HepG2 (cell line): ENCODE measurements at regions of chr22 and their contacts with region 1.

Region 1: DNA sequence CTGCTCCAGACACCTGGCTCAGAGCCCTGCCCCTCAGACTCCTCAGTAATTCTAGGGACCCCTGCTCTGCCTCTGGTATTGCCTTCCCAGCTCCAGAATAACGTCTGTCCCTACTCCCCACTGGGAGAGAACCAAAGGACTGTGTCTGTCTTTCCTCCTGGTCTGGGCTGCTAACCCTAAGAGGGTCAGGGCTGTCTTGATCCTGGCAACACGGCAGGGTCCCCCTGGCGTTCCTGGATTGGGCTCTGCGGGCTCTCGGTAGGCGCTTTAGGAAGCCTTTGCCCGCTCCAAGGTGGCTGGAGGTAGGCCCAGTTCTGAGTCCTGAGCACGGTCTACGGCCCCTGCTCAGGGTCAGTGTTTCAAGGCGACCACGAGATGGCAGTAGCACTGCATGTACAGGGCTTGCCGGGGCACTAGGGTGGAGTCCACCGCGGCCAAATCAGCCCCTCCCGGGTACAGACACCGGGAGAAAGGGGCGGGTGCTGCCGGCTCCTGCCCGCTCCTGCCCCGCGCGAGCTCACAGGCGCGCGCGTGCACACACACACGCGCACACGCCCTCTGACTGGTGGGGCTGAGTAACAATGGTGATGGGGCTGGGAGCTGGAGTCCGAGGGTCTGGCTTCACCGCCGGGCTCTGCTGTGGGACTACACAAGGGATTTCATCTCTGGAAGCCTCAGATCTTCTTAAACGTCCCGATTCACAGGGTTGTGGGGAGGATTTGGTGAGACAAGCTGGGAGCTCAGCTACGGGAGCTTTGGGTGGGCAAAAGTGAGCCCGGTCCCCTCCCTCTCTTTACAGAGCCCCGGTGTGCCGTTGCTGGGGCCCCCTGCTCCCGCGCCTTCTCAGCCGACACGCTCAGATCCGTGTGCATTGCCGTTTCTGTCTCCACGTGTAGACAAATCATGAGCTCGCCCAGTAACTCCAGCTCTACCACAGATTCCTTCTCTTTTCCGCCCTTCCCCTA is 30.1 kb upstream of the HMOX1 start:
- DNase-seq: peak; percentile 79
- ATAC-seq: peak; percentile 87
- H3K4me3 ChIP-seq: peak overlapping the region; percentile 56 to 80 (median 57)
- H3K27ac ChIP-seq: peak overlapping the region; percentile 53
- H3K4me1 ChIP-seq: peaks cover 53% of the 10 kb centered on the region
- H3K27me3 ChIP-seq: no peaks in the 10 kb centered on the region; a peak in 1 of 5 replicates
- CTCF ChIP-seq: peak; percentile 99
- EP300 ChIP-seq: no peak
- POLR2A ChIP-seq: peak in 1 of 2 experiments; percentile 50; a peak in 2 of 4 replicates
- RAD21 ChIP-seq: peak; percentile 99

Region 2: DNA sequence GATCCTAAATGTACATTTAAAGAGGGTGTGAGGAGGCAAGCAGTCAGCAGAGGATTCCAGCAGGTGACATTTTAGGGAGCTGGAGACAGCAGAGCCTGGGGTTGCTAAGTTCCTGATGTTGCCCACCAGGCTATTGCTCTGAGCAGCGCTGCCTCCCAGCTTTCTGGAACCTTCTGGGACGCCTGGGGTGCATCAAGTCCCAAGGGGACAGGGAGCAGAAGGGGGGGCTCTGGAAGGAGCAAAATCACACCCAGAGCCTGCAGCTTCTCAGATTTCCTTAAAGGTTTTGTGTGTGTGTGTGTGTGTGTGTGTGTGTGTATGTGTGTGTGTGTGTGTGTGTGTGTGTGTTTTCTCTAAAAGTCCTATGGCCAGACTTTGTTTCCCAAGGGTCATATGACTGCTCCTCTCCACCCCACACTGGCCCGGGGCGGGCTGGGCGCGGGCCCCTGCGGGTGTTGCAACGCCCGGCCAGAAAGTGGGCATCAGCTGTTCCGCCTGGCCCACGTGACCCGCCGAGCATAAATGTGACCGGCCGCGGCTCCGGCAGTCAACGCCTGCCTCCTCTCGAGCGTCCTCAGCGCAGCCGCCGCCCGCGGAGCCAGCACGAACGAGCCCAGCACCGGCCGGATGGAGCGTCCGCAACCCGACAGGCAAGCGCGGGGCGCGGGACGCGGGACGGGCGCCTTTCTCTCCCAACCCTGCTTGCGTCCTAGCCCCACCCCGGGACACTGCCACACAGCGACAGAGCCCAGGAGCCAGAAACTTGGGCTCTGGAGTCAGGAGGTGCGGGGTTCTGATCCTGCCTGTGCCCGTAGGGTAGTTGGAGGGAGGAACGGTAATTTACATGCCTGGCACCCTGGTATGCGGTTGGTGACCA is 30.0 kb after region 1 on chr22 and contains the start of gene HMOX1:
- CTCF ChIA-PET with region 1: interaction called, 5 read pairs
- POLR2A ChIA-PET with region 1: no interaction called
- in situ Hi-C with region 1: no loop called
- intact Hi-C with region 1: loop called (anchors 1 kb)
- DNase-seq: peak; percentile 73
- ATAC-seq: peak; percentile 83
- H3K4me3 ChIP-seq: peak within 1 kb of the TSS; percentile 61 to 92 (median 81)
- H3K27ac ChIP-seq: peak within 1 kb of the TSS; percentile 76
- H3K4me1 ChIP-seq: peaks cover 87% of the 10 kb centered on the region
- H3K27me3 ChIP-seq: no peaks in the 10 kb centered on the region; a peak in 1 of 5 replicates
- CTCF ChIP-seq: peak; percentile 72
- EP300 ChIP-seq: no peak
- POLR2A ChIP-seq: peak; percentile 79 to 93
- RAD21 ChIP-seq: peak; percentile 71
- total RNA-seq, gene HMOX1: 53.6 and 54.1 TPM in 2 replicates

Region 3: DNA sequence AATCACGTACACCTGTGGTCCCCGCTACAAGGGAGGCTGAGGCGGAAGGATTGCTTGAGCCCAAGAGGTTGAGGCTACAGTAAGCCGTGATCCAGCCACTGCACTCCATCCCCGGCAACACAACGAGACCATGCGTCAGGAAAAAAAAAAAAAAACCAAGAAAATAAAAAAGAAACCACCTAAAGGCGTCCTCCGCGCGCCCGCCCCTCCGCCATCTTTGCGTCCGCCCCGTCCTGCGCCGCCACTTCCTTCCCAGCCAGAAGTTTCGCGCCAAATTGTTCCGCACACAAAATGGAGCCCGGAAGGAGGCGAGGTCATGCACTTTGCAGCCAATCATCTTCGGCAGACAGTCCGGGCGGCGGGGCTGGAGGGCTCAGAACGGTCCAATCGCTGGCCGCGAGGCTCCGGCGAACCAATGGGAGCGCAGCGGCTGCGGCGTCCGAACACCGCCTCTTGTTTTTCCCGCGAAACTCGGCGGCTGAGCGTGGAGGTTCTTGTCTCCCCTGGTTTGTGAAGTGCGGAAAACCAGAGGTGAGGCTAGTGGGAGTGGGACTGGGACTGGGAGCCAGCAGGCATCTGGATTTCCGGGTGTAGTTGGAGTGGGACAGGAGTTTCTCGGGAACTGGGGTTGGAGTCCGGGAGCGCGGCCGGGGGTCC is 49.0 kb after region 1 on chr22 and contains the start of gene MCM5:
- CTCF ChIA-PET with region 1: interaction called, 3 read pairs
- POLR2A ChIA-PET with region 1: interaction called, 7 read pairs
- in situ Hi-C with region 1: no loop called
- intact Hi-C with region 1: loop called (anchors 5 kb)
- DNase-seq: peak; percentile 94
- ATAC-seq: peak; percentile 94
- H3K4me3 ChIP-seq: peak within 1 kb of the TSS; percentile 88 to 97 (median 89)
- H3K27ac ChIP-seq: peak within 1 kb of the TSS; percentile 88
- H3K4me1 ChIP-seq: peaks cover 73% of the 10 kb centered on the region
- H3K27me3 ChIP-seq: no peaks in the 10 kb centered on the region
- CTCF ChIP-seq: no peak
- EP300 ChIP-seq: no peak
- POLR2A ChIP-seq: peak; percentile 53 to 70
- RAD21 ChIP-seq: no peak
- total RNA-seq, gene MCM5: 87.1 and 93.5 TPM in 2 replicates

Region 4: DNA sequence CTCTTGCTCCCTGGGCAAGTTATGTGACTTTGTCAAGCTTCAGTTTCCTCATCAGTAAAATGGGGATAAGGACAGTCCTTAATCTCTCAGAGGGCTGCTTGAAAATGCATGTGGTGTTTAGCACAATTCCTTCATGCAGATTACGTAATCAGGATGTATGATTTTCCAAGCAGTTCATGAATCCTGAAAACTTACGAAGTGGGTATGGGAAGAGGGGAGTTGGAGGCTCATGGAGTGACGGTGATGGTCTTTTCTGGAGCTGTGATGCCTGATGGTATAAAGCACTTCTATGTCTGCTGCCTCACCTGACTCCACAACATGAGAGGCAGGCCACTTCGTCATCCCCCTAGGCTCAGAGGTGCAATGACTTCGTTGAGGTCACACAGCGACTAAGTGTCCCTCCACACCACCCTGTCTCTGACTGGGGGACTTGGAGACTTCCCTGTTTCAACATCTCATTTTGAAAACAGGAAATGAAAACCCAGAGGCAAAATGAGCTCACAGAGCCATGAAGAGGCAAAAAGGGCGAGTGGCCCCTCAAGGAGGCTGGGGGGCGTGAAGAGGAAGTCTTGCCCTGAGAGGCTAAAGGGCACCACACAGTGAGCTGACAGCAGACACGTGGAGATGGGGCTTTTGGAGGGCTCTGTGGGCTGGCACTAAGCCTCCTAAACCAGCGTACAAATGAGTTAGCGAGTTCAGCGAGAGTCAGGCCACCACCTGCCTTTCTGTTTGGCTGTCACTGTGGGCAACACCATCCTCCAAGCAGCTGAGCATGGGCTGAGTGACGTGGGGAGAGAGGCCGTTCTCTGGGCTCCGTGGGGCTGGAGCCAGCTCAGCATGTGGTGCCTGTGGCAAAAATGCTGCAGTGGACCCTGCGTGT is 59.2 kb after region 1 on chr22:
- CTCF ChIA-PET with region 1: interaction called, 3 read pairs
- POLR2A ChIA-PET with region 1: no interaction called
- in situ Hi-C with region 1: no loop called
- intact Hi-C with region 1: loop called (anchors 5 kb)
- DNase-seq: no peak
- ATAC-seq: no peak
- H3K4me3 ChIP-seq: no peak overlapping the region
- H3K27ac ChIP-seq: no peak overlapping the region
- H3K4me1 ChIP-seq: peaks cover 23% of the 10 kb centered on the region
- H3K27me3 ChIP-seq: no peaks in the 10 kb centered on the region
- CTCF ChIP-seq: no peak
- EP300 ChIP-seq: no peak
- POLR2A ChIP-seq: no peak
- RAD21 ChIP-seq: no peak

Region 5: DNA sequence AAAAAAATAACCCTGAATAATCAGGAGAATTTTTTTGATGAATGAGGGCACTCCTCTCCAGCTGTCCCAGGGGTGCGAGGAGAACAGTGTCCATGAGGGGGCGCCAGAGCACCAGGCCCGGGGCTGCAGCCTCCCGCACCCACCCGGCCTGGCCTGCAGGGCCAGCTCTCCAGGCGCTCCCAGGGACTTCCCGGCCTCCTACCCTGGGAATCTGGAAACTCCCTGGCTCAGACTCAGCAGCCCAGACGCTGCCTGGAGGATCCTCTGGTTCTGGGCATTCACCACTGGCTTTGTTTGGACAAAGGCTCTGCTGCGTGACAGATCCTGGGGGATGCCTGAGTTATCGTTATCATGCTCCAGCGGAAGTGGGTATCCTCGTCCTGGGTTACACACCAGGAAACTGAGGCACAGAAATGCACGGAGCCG is 80.1 kb after region 1 on chr22:
- CTCF ChIA-PET with region 1: interaction called, 9 read pairs
- POLR2A ChIA-PET with region 1: no interaction called
- in situ Hi-C with region 1: no loop called
- intact Hi-C with region 1: loop called (anchors 5 kb)
- DNase-seq: peak; percentile 55
- ATAC-seq: peak; percentile 94
- H3K4me3 ChIP-seq: no peak overlapping the region
- H3K27ac ChIP-seq: no peak overlapping the region
- H3K4me1 ChIP-seq: no peaks in the 10 kb centered on the region
- H3K27me3 ChIP-seq: no peaks in the 10 kb centered on the region
- CTCF ChIP-seq: peak; percentile 88
- EP300 ChIP-seq: no peak
- POLR2A ChIP-seq: no peak
- RAD21 ChIP-seq: peak; percentile 96

Region 6: GRCh38 chr22:35582861-35583670 is 232.2 kb after region 1 on chr22:
- CTCF ChIA-PET with region 1: interaction called, 17 read pairs
- POLR2A ChIA-PET with region 1: no interaction called
- in situ Hi-C with region 1: loop called (anchors 5 kb)
- intact Hi-C with region 1: loop called (anchors 1 kb)
- DNase-seq: peak; percentile 59
- ATAC-seq: peak; percentile 87
- H3K4me3 ChIP-seq: no peak overlapping the region
- H3K27ac ChIP-seq: no peak overlapping the region
- H3K4me1 ChIP-seq: no peaks in the 10 kb centered on the region
- H3K27me3 ChIP-seq: peaks cover 0 to 7% of the 10 kb centered on the region in 2 experiments; a peak in 1 of 5 replicates
- CTCF ChIP-seq: peak; percentile 92
- EP300 ChIP-seq: no peak
- POLR2A ChIP-seq: no peak
- RAD21 ChIP-seq: peak; percentile 85

Region 7: DNA sequence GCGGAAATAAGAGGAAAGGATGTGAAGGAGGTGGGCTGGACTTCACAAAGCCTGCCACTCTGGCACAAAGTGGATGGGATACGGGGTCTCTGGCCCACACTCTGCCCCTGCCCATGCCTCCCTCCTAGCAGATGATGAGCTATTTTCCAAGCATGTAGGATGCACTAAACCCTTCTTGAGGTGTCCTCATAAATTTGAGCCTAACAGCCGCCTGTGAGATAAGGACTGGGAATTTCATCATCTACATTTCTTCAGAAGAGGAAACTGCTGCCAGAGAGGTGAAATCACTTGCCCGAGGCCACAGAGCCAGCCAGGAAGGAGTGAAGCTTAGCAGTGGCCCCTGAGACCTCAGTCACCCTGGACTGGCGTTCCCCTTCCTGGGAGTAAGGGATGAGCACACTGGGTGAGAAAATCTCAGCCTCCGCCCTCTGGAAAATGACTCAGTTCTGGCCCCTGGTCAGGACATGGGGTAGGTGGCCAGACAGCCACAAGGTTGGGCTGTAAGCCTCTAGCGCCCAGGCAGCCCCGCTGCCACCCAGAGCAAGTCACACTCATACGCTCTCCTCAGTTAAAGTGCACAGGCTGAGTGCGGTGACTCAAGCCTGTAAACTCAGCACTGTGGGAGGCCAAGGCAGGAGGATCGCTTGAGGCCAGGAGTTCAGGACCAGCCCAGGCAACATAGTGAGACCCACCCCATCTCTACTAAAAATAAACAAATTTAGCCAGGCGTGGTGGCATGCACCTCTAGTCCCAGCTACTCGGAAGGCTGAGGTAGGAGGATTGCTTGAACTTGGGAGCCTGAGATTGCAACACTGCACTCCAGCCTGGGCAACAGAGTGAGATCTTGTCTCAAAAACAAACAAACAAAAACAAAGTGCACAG is 238.5 kb after region 1 on chr22:
- CTCF ChIA-PET with region 1: no interaction called
- POLR2A ChIA-PET with region 1: no interaction called
- in situ Hi-C with region 1: loop called (anchors 5 kb)
- intact Hi-C with region 1: no loop called
- DNase-seq: no peak
- ATAC-seq: peak; percentile 39; the same call in 2 of the 3 replicates
- H3K4me3 ChIP-seq: no peak overlapping the region
- H3K27ac ChIP-seq: no peak overlapping the region
- H3K4me1 ChIP-seq: peaks cover 29% of the 10 kb centered on the region
- H3K27me3 ChIP-seq: peaks cover 0 to 29% of the 10 kb centered on the region in 2 experiments; a peak in 3 of 5 replicates
- CTCF ChIP-seq: no peak
- EP300 ChIP-seq: no peak
- POLR2A ChIP-seq: no peak
- RAD21 ChIP-seq: no peak